ENCODE measurements at regions of chr1 and their contacts with region 1.

Region 1: GRCh38 chr1:66331657-66332547 is 202.1 kb upstream of the SGIP1 start:
- DNase-seq: peak; percentile 70
- ATAC-seq: peak; percentile 16
- H3K4me3 Mint-ChIP-seq: peak overlapping the region; percentile 99
- H3K27ac Mint-ChIP-seq: peak overlapping the region; percentile 98
- H3K4me1 Mint-ChIP-seq: peaks cover 48% of the 10 kb centered on the region
- H3K27me3 Mint-ChIP-seq: no peaks in the 10 kb centered on the region
- CTCF ChIP-seq: no peak

Region 2: GRCh38 chr1:66262211-66262963 is 69.5 kb before region 1 on chr1:
- CTCF ChIA-PET with region 1: interaction called, 23 read pairs
- POLR2A ChIA-PET with region 1: interaction called, 16 read pairs
- intact Hi-C with region 1: no loop called
- DNase-seq: no peak
- ATAC-seq: no peak
- H3K4me3 Mint-ChIP-seq: no peak overlapping the region
- H3K27ac Mint-ChIP-seq: no peak overlapping the region
- H3K4me1 Mint-ChIP-seq: peaks cover 69% of the 10 kb centered on the region
- H3K27me3 Mint-ChIP-seq: no peaks in the 10 kb centered on the region
- CTCF ChIP-seq: no peak

Region 3: DNA sequence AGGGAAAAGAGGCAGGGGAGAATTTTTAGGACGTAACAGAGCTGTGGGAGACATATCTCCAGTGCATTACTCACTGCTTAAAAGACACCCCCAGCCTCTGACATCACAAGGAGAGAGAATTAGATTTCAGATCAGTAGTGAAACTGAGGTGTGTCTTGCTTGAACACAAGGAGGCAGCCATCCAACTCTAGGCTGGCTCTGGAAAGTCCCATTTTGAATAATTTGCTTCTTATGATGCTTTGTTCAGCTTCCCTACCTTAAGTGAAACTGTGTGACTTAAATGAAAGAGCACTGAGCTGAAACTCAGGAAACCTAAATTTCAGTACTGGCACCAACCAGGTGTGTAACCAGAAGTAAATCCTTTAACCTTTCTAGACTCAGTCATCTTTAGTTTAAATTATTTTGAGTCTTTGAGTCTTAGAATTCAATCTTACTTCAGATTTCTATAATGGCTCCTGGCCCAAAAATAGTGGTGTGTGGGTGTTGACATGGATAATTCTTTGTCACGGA is 49.5 kb before region 1 on chr1:
- CTCF ChIA-PET with region 1: interaction called, 12 read pairs
- POLR2A ChIA-PET with region 1: interaction called, 69 read pairs
- intact Hi-C with region 1: loop called (anchors 2 kb)
- DNase-seq: peak; percentile 89
- ATAC-seq: peak; percentile 82
- H3K4me3 Mint-ChIP-seq: peak overlapping the region; percentile 14
- H3K27ac Mint-ChIP-seq: peak overlapping the region; percentile 93
- H3K4me1 Mint-ChIP-seq: peaks cover 90% of the 10 kb centered on the region
- H3K27me3 Mint-ChIP-seq: no peaks in the 10 kb centered on the region
- CTCF ChIP-seq: no peak

Region 4: DNA sequence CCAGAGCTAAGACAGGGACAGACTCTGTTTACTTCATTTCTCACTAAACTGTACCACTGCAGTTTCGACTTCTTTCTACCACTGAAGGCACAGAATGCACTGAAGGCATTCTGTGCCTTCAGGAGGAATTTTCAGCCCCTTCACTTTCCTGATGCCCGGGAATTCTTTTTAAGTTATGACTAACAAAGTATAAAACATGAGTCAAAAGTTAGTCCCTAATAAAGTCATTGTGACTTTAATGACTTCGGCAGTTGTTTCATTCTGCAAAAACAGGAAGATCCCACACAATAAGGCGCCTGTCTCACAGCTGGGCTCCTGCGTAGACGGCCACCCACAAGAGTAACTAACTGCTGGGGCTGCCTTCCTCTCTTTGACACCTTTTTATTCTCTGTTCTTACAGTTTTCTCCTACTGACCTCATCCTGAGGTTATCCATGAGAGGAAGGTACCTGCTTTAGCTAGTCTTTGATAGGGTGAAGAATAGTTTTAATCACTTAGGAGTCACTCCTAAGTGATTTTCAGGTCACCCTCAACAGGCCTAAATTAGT is 18.2 kb after region 1 on chr1:
- CTCF ChIA-PET with region 1: interaction called, 23 read pairs
- POLR2A ChIA-PET with region 1: interaction called, 63 read pairs
- intact Hi-C with region 1: loop called (anchors 2 kb)
- DNase-seq: peak; percentile 83
- ATAC-seq: peak; percentile 74
- H3K4me3 Mint-ChIP-seq: peak overlapping the region; percentile 70
- H3K27ac Mint-ChIP-seq: peak overlapping the region; percentile 81
- H3K4me1 Mint-ChIP-seq: peaks cover 96% of the 10 kb centered on the region
- H3K27me3 Mint-ChIP-seq: no peaks in the 10 kb centered on the region
- CTCF ChIP-seq: no peak

Measured in activated CD8-positive, alpha-beta T cell treated with anti-CD3 and anti-CD28 coated beads for 36 hours (primary cell).